Gastrocnemius medialis (tissue), 4 donors: ENCODE measurements at regions of chr17 and their contacts with region 1.

Region 1: DNA sequence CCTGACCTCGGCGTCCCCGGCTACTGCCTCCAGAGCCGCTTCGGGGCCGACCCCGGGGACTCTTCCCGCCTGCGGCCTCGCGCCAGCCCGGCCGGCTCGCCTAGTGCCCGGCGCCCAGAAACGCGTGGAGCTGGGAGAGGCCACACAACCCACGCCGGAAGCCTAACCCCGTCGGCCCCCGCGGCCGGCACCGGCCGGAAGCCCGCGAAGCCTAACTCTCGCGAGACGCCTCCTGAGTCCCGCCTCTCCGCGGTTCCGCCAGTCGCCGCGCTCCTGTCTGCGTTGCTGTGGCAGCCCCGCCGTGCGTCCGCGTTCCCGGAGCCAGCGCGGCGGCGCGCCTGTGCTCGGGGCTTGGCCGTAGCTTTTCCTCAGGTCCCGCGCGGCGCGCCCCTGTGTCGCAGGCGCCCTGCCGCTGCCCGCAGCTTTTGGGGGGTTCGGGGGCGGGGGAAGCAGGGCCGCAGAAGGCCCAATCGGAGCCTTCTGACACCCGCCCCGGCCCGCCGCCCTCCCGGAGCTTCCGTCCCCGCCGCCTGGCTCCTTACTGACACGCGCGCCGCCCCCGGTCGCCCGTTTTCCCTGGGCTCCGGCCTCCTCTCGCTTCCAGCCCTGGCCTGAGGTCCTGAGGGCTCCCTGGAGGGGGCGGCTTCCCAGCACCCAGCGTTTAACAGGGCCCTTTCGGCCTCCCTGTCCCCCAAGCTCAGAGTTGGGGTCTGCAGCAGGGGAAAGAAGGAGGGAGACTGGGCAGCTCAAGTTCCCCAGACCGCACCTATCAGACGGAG is 21.7 kb downstream of the NPTX1 start:
- DNase-seq: peak; percentile 93 to 95
- ATAC-seq: peak; percentile 78 to 79
- H3K4me3 ChIP-seq: peak overlapping the region; percentile 66 to 98 (median 89)
- H3K27ac ChIP-seq: peak overlapping the region; percentile 92 to 100 (median 98)
- H3K4me1 ChIP-seq: peaks cover 24 to 34% of the 10 kb centered on the region in 2 donors
- H3K27me3 ChIP-seq: no peaks in the 10 kb centered on the region
- CTCF ChIP-seq: peak in 1 of 5 experiments; percentile 24
- POLR2A ChIP-seq: peak; percentile 95 to 97

Region 2: DNA sequence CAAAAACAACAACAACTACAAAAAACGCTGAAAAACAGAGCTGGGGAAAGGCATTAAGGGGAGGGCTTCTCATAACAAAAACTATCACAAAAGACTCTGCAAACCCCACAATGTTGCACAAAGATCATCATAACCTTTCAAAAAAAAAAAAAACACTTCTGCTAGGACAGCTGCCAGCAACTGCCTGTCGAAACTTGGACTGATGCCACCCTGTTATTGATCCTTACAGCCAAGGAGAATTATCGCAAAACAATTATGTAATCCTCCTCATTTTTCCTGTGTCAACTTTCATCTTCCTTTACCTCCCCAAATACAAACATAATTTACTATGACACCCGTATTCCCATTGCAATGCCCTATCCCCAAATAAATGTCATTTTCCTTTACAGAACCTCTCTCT is 409.0 kb before region 1 on chr17:
- in situ Hi-C with region 1: no loop called
- intact Hi-C with region 1: no loop called
- DNase-seq: no peak
- ATAC-seq: no peak
- H3K4me3 ChIP-seq: no peak overlapping the region
- H3K27ac ChIP-seq: no peak overlapping the region
- H3K4me1 ChIP-seq: no peaks in the 10 kb centered on the region
- H3K27me3 ChIP-seq: no peaks in the 10 kb centered on the region
- CTCF ChIP-seq: no peak
- POLR2A ChIP-seq: no peak

Region 3: GRCh38 chr17:80263253-80264204 is 191.2 kb before region 1 on chr17:
- in situ Hi-C with region 1: no loop called
- intact Hi-C with region 1: loop called (anchors 5 kb)
- DNase-seq: peak; percentile 81 to 86
- ATAC-seq: peak; percentile 50 to 66
- H3K4me3 ChIP-seq: peak overlapping the region; percentile 30 to 47 (median 37)
- H3K27ac ChIP-seq: peak overlapping the region; percentile 93 to 100 (median 98)
- H3K4me1 ChIP-seq: peaks cover 24 to 34% of the 10 kb centered on the region in 2 donors
- H3K27me3 ChIP-seq: no peaks in the 10 kb centered on the region
- CTCF ChIP-seq: peak in 1 of 5 experiments; percentile 22
- POLR2A ChIP-seq: peak in 1 of 2 donors; percentile 32

Region 4: DNA sequence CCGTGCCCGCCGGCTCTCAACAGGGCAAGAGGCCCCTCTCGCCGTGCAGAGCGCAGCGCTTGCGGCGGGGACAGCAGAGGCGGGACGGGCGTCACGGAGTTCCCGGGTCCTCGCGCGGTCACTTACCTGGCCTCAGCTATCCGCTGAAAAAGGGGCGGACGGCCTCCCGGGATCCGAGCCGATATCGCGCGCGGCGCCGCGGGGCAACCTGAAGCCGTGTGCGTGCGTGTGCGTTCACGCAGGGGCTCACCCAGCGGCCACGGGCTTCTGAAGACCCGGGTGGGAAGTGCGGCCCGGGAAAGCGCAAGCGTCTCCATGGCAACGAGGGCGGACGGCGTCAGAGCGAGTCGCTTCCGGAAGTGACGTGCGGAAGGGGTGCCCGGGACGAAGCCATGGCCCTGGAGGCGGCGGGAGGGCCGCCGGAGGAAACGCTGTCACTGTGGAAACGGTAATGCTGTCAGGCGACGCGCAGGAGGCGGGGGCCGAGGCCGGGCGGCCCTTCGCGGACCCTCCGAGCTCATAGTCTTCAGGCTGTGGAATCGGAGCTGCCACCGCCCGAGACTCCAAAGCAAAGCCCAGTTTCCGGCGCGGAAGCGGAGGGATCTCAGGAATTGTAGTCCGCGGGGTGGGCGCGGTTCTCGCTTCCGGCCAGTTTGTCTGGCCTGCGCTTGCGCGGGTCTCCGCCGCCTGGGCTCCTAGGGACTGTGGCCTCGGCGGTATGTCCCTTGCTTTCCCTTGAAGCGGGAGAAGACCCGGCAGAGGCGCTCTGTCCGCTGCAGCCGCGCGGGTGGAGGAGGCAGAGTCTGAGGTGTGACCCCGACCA is 39.7 kb before region 1 on chr17 and contains the start of gene ENDOV:
- in situ Hi-C with region 1: no loop called
- intact Hi-C with region 1: loop called (anchors 1 kb)
- DNase-seq: peak; percentile 85 to 87
- ATAC-seq: peak; percentile 97 to 98
- H3K4me3 ChIP-seq: peak within 1 kb of the TSS; percentile 86 to 98 (median 92)
- H3K27ac ChIP-seq: peak within 1 kb of the TSS; percentile 92 to 99 (median 97)
- H3K4me1 ChIP-seq: peaks cover 29 to 32% of the 10 kb centered on the region in 2 donors
- H3K27me3 ChIP-seq: no peaks in the 10 kb centered on the region
- CTCF ChIP-seq: no peak
- POLR2A ChIP-seq: peak; percentile 58 to 62
- total RNA-seq, gene ENDOV: 9.1 to 24.1 (median 18.0) TPM

Region 5: GRCh38 chr17:80544655-80545498 is 90.1 kb after region 1 on chr17 and contains the start of gene RPTOR:
- in situ Hi-C with region 1: no loop called
- intact Hi-C with region 1: loop called (anchors 10 kb)
- DNase-seq: peak; percentile 79 to 84
- ATAC-seq: peak; percentile 95 to 97
- H3K4me3 ChIP-seq: peak within 1 kb of the TSS; percentile 72 to 98 (median 96)
- H3K27ac ChIP-seq: peak within 1 kb of the TSS; percentile 84 to 89 (median 86)
- H3K4me1 ChIP-seq: peaks cover 25 to 40% of the 10 kb centered on the region in 2 donors
- H3K27me3 ChIP-seq: no peaks in the 10 kb centered on the region
- CTCF ChIP-seq: peak in 1 of 5 experiments; percentile 12
- POLR2A ChIP-seq: peak; percentile 24 to 33
- total RNA-seq, gene RPTOR: 47.6 to 56.9 (median 55.4) TPM

Region 6: DNA sequence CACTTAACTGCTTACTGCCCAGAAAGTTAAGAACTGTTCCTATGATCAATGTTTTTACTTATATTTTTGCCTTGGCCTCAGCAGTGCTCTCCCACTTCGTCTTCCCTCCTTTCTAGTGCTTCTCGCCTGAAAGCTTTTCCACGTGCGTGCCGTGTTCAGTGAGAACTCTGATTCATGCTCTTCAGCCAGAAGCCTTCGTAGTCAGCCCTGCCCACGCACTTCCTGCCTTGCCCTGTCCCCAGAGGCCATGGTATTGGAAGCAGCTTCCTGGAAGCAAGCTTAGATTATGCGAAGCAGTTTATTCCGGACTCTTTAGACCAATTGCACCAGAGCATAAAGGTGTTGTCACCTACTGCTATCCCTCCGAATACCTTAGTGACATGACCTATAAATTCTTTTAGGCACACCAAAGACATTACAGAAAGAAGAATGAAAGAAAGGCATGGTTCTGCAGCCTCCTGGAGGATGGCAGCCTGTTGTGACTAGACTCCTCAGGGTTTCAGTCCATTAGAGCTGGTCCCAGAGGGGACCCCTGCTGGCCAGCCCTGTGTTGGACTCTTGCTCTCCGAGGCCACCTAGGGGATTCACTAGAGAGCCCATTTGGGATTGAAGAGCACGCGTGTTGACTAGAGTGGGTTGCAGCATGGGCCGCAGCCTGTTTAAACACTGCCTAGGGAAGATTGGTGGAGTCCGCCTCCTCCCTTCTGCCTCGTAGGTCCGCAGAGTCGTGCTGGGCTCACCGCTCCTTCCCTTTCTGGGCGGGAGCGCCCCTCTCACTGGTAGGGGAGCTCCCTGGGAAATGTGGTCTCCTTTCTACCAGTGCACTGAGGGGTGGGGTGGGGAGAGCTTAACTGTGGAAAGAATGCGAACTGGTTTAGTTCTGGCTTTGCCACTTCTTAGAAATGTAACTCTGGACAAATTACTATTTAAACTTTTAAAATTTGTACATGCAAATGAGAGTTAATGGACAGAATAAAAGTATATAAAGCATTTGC is 195.2 kb after region 1 on chr17:
- in situ Hi-C with region 1: no loop called
- intact Hi-C with region 1: loop called (anchors 2 kb)
- DNase-seq: peak; percentile 22 to 48
- ATAC-seq: peak; percentile 29 to 43
- H3K4me3 ChIP-seq: peak overlapping the region in 1 of 4 donors; percentile 3
- H3K27ac ChIP-seq: peak overlapping the region; percentile 56 to 78 (median 62)
- H3K4me1 ChIP-seq: peaks cover 30 to 47% of the 10 kb centered on the region in 2 donors
- H3K27me3 ChIP-seq: no peaks in the 10 kb centered on the region
- CTCF ChIP-seq: peak in 4 of 5 experiments; percentile 26 to 48 (median 38)
- POLR2A ChIP-seq: no peak

Region 7: GRCh38 chr17:80855948-80856862 is 401.5 kb after region 1 on chr17:
- in situ Hi-C with region 1: no loop called
- intact Hi-C with region 1: loop called (anchors 2 kb)
- DNase-seq: peak; percentile 94 to 96
- ATAC-seq: peak; percentile 93 to 94
- H3K4me3 ChIP-seq: no peak overlapping the region
- H3K27ac ChIP-seq: peak overlapping the region; percentile 90 to 93 (median 91)
- H3K4me1 ChIP-seq: peaks cover 42 to 45% of the 10 kb centered on the region in 2 donors
- H3K27me3 ChIP-seq: no peaks in the 10 kb centered on the region
- CTCF ChIP-seq: no peak
- POLR2A ChIP-seq: peak; percentile 56 to 74